Astrocyte of the cerebellum (primary cell): ENCODE measurements at regions of chr7 and their contacts with region 1.

Region 1: DNA sequence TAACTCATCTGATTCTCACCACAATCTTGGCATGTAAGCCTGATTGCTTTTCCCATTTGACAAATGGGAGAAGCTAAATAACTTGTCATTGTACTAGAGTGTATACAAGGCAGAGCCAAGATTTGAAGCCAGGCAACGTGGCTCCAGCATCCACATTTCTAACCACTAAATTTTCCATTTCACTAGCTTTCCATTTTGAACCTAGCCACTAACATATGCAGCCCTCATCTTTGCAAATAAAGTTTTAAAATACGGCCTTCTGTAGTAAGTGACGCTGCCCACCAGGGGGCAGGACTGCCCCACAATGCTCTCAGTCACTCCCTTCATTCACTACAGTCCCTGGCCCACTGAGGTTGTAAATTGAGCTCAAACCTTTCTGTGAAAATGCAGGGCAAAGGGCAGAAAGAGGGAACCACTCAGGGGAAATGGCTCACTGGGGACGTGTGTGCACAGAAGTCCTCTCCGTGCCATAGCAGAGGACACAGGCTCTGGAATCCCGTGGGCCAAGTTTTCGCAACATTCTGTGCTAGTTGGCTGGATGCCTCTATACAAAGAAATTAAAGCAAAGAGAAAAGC is 315.7 kb downstream of the TNS3 start:
- DNase-seq: peak; percentile 91
- H3K4me3 ChIP-seq: no peak overlapping the region
- CTCF ChIP-seq: peak; percentile 91

Region 2: GRCh38 chr7:47227762-47228177 is 38.4 kb before region 1 on chr7:
- in situ Hi-C with region 1: no loop called
- DNase-seq: peak; percentile 19
- H3K4me3 ChIP-seq: no peak overlapping the region
- CTCF ChIP-seq: no peak

Region 3: GRCh38 chr7:47320296-47320695 is 54.1 kb after region 1 on chr7:
- in situ Hi-C with region 1: loop called (anchors 5 kb)
- DNase-seq: no peak
- H3K4me3 ChIP-seq: no peak overlapping the region
- CTCF ChIP-seq: no peak